ENCODE measurements at regions of chr2 and their contacts with region 1.

Region 1: GRCh38 chr2:1591978-1592907 is 152.1 kb downstream of the PXDN start:
- DNase-seq: peak; percentile 74 to 88 (median 83)
- ATAC-seq: peak; percentile 88
- H3K4me3 ChIP-seq: no peak overlapping the region
- H3K4me1 ChIP-seq: peaks cover 6% of the 10 kb centered on the region
- CTCF ChIP-seq: peak; percentile 41

Region 2: DNA sequence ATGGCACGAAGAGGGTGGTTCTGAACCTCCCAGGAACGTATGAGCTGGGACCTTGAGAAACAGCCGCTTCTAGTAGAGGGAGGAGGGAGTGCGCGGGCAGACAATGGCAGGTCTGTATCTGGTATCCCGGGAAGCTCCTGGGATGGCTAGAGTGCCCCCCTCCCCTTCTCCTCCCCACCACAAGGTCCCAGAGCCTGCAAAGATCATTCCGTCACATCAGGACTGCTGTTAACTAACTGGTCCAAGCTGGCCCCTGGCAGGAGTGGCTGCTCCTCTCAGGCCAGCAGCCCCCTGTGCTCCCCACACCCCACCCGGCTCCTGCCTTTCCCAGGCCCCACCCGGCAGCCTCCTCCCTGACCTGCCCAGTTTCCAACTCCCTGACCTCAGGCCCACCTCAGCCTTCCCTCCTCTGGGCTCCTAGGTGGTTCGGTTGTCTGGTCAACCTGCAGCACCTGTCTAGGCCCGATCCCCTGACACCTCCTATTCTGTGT is 104.0 kb before region 1 on chr2:
- intact Hi-C with region 1: no loop called
- DNase-seq: no peak
- ATAC-seq: no peak
- H3K4me3 ChIP-seq: no peak overlapping the region
- H3K4me1 ChIP-seq: no peaks in the 10 kb centered on the region
- CTCF ChIP-seq: no peak

Region 3: GRCh38 chr2:1653956-1654695 is 61.9 kb after region 1 on chr2:
- intact Hi-C with region 1: no loop called
- DNase-seq: no peak
- ATAC-seq: no peak
- H3K4me3 ChIP-seq: no peak overlapping the region
- H3K4me1 ChIP-seq: peaks cover 7% of the 10 kb centered on the region
- CTCF ChIP-seq: no peak

Region 4: GRCh38 chr2:1742681-1743395 is 150.6 kb after region 1 on chr2:
- intact Hi-C with region 1: loop called in 1 of 2 experiments (anchors 10 kb)
- DNase-seq: peak in 2 of 3 donors; percentile 69 to 77
- ATAC-seq: peak; percentile 52
- H3K4me3 ChIP-seq: no peak overlapping the region
- H3K4me1 ChIP-seq: peaks cover 5% of the 10 kb centered on the region
- CTCF ChIP-seq: no peak

Region 5: GRCh38 chr2:1755436-1756191 is 163.4 kb after region 1 on chr2:
- intact Hi-C with region 1: loop called in 1 of 2 experiments (anchors 5 kb)
- DNase-seq: no peak
- ATAC-seq: no peak
- H3K4me3 ChIP-seq: no peak overlapping the region
- H3K4me1 ChIP-seq: no peaks in the 10 kb centered on the region
- CTCF ChIP-seq: no peak

Measured in mucosa of descending colon (tissue), 3 donors.